ENCODE measurements at regions of chr12 and their contacts with region 1.

Region 1: DNA sequence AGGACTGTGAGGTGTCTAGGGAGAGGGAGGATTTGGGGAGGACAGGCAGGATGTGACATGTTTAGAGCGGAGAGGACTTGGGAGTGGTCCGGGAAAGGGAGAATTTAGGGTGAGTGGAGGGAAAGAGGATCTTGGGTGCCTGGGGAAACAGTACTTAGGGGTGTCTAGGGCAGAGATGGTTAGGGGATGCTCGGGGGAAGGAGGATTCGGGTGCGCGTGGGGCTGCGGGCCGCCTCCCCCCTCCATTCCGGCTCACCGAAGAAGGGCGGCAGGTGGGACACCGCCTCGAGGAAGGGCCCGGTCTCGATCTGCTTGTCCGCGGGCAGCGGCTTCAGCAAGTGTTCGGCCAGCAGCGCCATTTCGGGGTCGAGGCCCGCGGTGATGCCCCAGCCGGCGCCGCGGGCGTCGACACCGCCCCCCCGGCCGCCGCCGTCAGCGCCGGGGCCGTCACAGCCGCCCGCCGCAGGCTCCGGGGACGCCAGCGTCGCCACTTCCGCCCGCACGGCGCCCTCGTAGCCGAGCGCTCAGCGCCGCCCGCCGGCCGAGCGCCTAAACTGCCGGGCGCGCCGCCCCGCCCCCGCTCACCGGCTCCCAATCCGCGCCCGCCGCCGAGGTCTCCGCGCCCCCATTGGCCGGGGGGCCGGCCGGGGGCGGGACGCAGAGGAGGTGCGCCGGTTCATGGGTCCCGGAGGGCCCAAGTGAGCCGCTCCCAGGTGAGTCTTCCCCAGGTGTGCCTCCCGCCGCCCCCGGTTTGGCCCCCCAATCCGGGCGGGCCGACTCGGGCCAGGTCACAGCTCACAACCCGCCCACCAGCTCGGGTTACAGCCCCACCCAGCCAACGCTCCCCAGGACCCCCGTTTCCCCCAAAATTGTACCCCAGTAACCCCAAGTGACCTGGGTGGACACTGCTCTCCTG is at the start of gene GLTP:
- DNase-seq: peak; percentile 92 to 99 (median 98)
- ATAC-seq: peak; percentile 99
- H3K4me3 ChIP-seq: peak within 1 kb of the TSS; percentile 64
- H3K27ac ChIP-seq: no peak within 1 kb of the TSS
- H3K4me1 ChIP-seq: peaks cover 5 to 18% of the 10 kb centered on the region in 2 experiments; a peak in 4 of 5 replicates
- H3K27me3 ChIP-seq: peaks cover 32 to 41% of the 10 kb centered on the region in 2 experiments
- CTCF ChIP-seq: peak in 2 of 3 experiments; percentile 78 to 88; a peak in 5 of 6 replicates
- EP300 ChIP-seq: no peak
- POLR2A ChIP-seq: no peak
- RAD21 ChIP-seq: peak; percentile 61 to 89
- polyA plus RNA-seq, gene GLTP: 4.4 to 5.0 TPM

Region 2: DNA sequence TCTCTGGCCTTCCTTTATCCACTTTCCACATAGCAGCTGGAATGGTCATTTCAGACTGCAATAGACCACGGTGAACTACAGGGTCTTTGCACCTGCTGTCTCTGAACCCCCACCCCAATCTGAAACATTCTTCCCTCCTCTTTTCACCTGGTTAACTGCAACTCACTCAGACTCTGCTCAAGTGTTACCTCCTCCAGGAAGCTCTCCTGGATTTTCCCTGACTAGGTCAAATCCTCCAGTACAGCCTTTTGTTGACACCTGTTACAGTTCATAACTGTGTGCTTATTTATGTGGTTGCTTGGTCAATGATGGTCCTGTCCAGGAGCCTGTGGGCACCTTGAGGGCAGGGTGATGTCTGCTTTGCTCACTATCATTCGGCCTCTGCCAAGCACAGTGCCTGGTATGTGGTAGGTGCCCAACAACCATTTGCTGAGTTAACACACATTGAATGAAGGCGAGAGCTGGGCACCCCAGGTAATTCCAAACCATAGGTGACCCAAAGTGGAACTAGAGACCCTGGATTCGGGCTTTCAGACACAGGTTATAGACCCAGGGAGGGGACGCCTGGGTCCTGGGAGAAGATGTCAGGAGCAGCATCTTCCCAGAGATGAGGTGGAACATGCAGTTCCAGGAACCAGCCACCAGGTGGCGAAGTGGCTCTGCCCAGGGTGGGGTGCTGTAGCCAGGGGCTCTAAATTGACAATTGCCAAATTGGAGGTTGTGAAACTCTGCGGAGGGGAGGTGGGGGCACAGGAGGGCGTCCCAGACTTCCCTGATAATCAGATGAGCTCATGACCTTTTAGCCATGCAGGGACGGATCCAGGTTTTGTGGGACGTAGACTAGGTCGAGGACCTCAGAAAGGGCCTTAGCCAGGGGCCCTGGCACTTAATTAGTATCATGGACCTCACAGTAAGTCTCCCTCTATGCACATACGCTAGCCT is 75.2 kb before region 1 on chr12:
- CTCF ChIA-PET with region 1: interaction called, 16 read pairs
- POLR2A ChIA-PET with region 1: no interaction called
- in situ Hi-C with region 1: no loop called
- intact Hi-C with region 1: loop called (anchors 5 kb)
- DNase-seq: peak; percentile 63 to 90 (median 87)
- ATAC-seq: peak; percentile 95
- H3K4me3 ChIP-seq: no peak overlapping the region
- H3K27ac ChIP-seq: no peak overlapping the region
- H3K4me1 ChIP-seq: no peaks in the 10 kb centered on the region; a peak in 1 of 5 replicates
- H3K27me3 ChIP-seq: peaks cover 4 to 24% of the 10 kb centered on the region in 2 experiments; a peak in 3 of 5 replicates
- CTCF ChIP-seq: peak; percentile 90 to 96 (median 90)
- EP300 ChIP-seq: no peak
- POLR2A ChIP-seq: no peak
- RAD21 ChIP-seq: peak; percentile 68 to 86

Region 3: GRCh38 chr12:109858764-109859163 is 21.5 kb before region 1 on chr12:
- CTCF ChIA-PET with region 1: interaction called, 11 read pairs
- POLR2A ChIA-PET with region 1: interaction called, 4 read pairs
- in situ Hi-C with region 1: no loop called
- intact Hi-C with region 1: loop called (anchors 1 kb)
- DNase-seq: no peak
- ATAC-seq: no peak
- H3K4me3 ChIP-seq: no peak overlapping the region
- H3K27ac ChIP-seq: no peak overlapping the region
- H3K4me1 ChIP-seq: peaks cover 0 to 8% of the 10 kb centered on the region in 2 experiments; a peak in 2 of 5 replicates
- H3K27me3 ChIP-seq: peaks cover 0 to 14% of the 10 kb centered on the region in 2 experiments; a peak in 2 of 5 replicates
- CTCF ChIP-seq: no peak
- EP300 ChIP-seq: no peak
- POLR2A ChIP-seq: no peak
- RAD21 ChIP-seq: no peak

Measured in K562 (cell line).